Sigmoid colon (tissue), 7 donors: ENCODE measurements at regions of chr17 and their contacts with region 1.

Region 1: DNA sequence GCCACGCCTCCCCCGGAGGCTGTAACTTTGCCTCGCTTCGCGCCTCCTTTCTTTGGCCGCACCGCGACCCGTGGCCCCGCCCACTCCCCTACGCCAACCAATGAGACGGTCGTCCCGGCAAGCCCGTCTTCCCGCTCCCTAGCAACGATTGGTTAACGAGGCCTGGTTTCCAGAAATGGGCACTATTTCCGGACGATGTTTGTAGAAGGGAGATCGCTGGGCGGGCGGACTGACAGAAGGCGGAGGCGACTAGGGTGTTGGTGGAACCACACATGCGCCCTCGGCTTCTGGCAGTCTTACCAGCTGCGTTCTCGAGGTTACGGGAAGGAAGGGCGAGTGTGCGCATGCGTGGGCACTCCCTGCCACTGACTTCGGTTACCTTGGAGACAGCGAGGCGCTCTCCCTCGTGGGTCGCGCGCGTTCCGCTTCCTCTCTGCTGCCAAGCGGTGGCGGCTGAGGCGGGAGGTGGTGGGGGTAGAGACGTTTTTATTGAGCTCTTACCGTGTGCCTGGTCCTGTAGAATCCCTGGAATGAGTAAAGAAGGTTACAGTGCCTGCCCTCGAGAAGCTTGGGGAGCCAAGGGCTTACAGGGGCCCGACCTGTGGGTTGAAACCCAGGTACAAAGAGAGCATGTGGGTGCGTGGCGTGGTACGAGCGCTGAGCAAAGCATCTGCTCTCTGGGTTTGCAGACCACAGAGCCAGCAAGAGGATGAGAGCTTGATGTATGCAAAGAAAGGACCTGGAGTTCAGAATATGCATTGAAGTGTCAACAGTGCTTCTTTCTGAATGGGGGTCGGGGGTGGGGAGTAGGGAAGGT is 500 bp upstream of the MAP3K14 start:
- DNase-seq: peak; percentile 100
- H3K4me3 ChIP-seq: peak overlapping the region; percentile 26 to 93 (median 86)
- H3K27ac ChIP-seq: peak overlapping the region; percentile 95 to 98 (median 97)
- H3K4me1 ChIP-seq: peaks cover 2 to 88% (median 72%) of the 10 kb centered on the region in 4 donors
- H3K27me3 ChIP-seq: no peaks in the 10 kb centered on the region
- CTCF ChIP-seq: no peak
- EP300 ChIP-seq: peak in 1 of 4 donors; percentile 39
- POLR2A ChIP-seq: peak in 1 of 2 donors; percentile 33

Region 2: GRCh38 chr17:45148183-45149036 is 168.9 kb before region 1 on chr17 and contains the start of gene HEXIM1:
- intact Hi-C with region 1: loop called (anchors 5 kb)
- DNase-seq: peak; percentile 100
- H3K4me3 ChIP-seq: peak within 1 kb of the TSS; percentile 81 to 92 (median 89)
- H3K27ac ChIP-seq: peak within 1 kb of the TSS; percentile 97 to 99 (median 98)
- H3K4me1 ChIP-seq: peaks cover 6 to 59% (median 50%) of the 10 kb centered on the region in 4 donors
- H3K27me3 ChIP-seq: no peaks in the 10 kb centered on the region
- CTCF ChIP-seq: no peak
- EP300 ChIP-seq: peak in 1 of 4 donors; percentile 68
- POLR2A ChIP-seq: peak; percentile 100
- total RNA-seq, gene HEXIM1: 41.0 to 60.9 (median 49.4) TPM

Region 3: DNA sequence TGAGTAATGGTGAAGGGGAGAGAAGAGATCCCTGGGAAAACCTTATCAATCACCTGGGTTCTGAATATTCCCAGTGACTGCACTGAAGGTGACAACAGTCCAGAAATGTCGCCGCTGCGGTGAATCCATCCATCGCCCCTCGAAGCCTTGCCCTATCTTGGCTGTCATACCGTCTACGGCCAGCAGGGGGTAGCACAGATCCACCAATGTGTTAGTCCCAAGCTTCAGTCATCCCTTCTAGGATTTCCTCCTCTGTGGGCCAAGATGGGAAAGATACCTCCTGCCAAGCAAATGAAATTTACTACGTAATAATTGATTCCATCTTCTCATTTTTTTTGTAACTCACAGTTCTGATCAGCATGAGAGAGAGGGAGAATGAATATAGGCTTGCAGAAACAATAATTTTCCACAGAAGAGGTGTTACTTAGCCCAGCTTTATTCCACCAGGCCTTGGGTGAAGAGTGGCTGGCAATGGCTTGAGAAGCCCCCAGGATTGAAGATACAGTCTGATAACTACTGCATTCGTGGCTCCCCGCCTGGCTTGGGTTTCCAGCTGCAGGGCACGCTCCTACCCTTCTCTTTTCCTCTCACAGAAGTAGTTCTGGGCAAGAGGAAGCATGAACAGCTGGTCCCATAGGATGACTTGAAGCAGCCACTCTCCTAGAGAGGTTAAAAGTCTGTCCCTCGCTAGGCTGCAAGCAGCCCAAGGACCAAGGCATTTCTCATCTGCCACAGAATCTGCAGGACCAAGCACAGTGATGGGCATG is 98.2 kb before region 1 on chr17:
- intact Hi-C with region 1: loop called (anchors 5 kb)
- DNase-seq: peak; percentile 90
- H3K4me3 ChIP-seq: no peak overlapping the region
- H3K27ac ChIP-seq: no peak overlapping the region
- H3K4me1 ChIP-seq: peaks cover 0 to 20% (median 14%) of the 10 kb centered on the region in 4 donors
- H3K27me3 ChIP-seq: peaks cover 7 to 31% (median 18%) of the 10 kb centered on the region in 3 donors
- CTCF ChIP-seq: peak; percentile 90 to 99 (median 96)
- EP300 ChIP-seq: no peak
- POLR2A ChIP-seq: no peak

Region 4: GRCh38 chr17:45277216-45277849 is 40.0 kb before region 1 on chr17:
- intact Hi-C with region 1: loop called (anchors 2 kb)
- DNase-seq: peak; percentile 96
- H3K4me3 ChIP-seq: no peak overlapping the region
- H3K27ac ChIP-seq: peak overlapping the region; percentile 67 to 98 (median 92)
- H3K4me1 ChIP-seq: peaks cover 0 to 60% (median 51%) of the 10 kb centered on the region in 4 donors
- H3K27me3 ChIP-seq: no peaks in the 10 kb centered on the region
- CTCF ChIP-seq: peak; percentile 71 to 95 (median 94)
- EP300 ChIP-seq: no peak
- POLR2A ChIP-seq: no peak

Region 5: DNA sequence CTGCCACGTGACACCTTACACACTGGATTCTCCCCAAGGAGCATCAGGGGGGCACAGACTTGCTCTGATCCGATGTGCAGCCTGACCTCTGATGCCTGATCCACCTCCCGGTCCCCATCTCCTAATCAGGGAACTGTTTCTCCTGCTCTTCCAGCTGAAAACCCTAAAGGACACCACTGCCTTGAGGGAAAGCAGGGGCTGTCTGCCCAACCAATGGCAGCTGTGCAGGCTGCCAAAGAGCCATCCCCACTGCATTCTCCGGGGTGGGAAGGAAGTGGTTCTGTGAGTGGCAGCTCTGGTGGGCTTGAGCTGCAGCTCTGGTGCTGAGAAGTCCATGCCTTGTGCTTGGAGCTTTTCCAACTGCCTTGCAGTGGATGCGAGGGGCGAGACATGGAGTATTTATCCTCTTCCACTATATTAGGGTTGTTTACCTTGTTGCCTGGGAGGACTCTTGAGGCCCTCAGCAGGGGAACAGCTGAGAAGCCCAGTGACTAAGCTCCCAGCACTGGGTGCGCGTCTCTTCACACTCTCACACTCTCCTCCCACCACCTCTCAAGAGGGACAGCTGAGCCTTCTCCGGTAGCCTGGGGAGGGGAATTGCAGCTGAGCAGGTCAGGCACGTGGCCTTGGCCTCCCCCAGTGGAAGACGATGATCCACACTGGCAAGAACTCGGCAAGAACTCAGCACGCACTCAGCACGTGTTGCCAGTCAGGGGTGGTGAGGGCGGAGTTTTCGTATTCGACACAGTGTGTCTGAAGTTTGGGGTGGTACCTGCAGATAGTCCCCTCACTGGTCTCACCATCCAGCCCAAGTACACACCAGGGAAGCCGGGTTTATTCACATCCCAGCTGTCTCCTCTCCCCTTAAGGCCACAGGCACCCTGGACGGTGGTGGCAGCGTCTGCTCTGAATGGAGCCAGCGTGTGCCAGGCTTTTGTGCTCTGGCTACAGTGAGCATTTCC is 34.4 kb before region 1 on chr17:
- intact Hi-C with region 1: loop called (anchors 2 kb)
- DNase-seq: peak; percentile 91
- H3K4me3 ChIP-seq: no peak overlapping the region
- H3K27ac ChIP-seq: peak overlapping the region; percentile 82 to 98 (median 92)
- H3K4me1 ChIP-seq: peaks cover 0 to 88% (median 74%) of the 10 kb centered on the region in 4 donors
- H3K27me3 ChIP-seq: no peaks in the 10 kb centered on the region
- CTCF ChIP-seq: no peak
- EP300 ChIP-seq: no peak
- POLR2A ChIP-seq: no peak

Region 6: DNA sequence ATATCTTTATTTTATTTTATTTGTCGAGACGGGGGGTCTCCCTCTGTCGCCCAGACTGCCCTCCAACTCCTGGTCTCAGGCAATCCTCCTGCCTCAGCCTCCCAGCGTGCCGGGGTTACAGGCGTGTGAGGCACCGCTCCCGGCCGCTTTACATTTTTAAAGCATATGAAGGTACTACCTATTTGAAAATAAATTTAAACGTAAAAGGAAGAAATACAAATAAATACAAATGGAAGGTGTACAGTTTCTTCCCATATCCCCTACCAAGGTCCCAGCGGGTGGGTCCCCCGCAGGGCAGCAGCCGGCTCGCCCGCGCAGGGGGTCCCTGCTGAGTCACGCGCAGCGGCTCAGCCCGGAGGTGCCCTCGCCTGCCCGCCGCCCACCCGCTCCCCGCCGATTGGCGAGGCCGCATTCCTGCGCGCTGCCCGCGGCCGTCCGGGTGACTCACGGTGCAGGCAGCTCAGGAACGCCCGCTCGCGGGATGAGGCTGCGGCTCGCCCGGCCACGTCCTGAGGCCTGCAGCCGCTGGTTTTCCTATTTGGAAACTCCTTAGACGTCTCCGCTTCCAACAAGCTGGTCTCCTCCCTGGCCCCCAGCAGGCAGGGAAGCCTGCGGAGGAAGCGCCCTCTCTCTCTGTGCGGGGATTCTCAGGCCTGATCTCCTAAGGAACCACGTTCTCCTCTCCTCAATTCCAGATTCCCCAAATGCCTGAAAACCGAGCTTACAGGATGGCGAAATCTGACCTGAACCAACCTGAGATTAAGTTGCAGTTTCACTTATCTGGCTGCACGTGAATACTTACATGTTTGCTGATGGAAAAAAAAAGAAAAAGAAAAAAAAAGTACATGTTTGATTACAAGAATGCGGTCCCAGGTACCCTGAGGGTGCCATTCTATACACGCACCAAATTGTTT is 54.4 kb after region 1 on chr17:
- intact Hi-C with region 1: loop called (anchors 2 kb)
- DNase-seq: peak; percentile 90
- H3K4me3 ChIP-seq: peak overlapping the region in 3 of 4 donors; percentile 34 to 45 (median 42)
- H3K27ac ChIP-seq: peak overlapping the region; percentile 80 to 88 (median 85)
- H3K4me1 ChIP-seq: peaks cover 0 to 33% (median 26%) of the 10 kb centered on the region in 4 donors
- H3K27me3 ChIP-seq: no peaks in the 10 kb centered on the region
- CTCF ChIP-seq: no peak
- EP300 ChIP-seq: no peak
- POLR2A ChIP-seq: peak in 1 of 2 donors; percentile 35

Region 7: DNA sequence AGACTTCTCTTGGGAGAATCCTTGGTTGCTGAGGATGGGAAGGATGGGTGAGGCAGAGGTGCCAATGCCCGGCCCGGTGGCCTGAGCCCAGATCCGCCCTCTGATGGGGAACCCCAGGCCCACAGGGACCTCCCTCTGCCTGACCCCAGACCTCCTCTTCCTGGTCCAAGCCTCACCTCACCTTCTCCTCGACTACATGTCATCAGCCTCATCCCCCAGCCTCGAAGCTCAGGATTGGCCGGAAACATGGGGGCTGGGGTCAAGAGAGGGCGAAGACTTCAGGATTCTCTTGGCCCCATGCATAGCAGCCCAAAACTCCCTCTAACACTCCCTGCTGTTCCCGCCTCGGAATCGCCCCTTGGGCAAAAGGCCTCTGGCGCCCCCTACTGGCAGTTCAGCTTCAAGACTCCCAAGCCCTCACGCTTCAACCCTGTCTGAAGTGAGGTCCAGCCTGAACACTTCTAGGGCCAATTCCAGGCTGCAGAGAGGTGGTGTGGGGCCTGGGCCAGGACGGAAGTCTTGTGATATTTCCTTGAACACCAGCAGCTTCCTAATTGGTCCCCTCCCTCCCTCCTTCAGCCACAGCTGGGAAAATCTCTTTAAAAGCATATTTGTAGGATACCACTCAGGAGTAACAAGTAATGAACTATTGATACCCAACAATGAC is 68.1 kb after region 1 on chr17:
- intact Hi-C with region 1: loop called (anchors 2 kb)
- DNase-seq: peak; percentile 93
- H3K4me3 ChIP-seq: no peak overlapping the region
- H3K27ac ChIP-seq: no peak overlapping the region
- H3K4me1 ChIP-seq: peaks cover 0 to 6% (median 5%) of the 10 kb centered on the region in 4 donors
- H3K27me3 ChIP-seq: no peaks in the 10 kb centered on the region
- CTCF ChIP-seq: peak; percentile 96 to 98 (median 97)
- EP300 ChIP-seq: no peak
- POLR2A ChIP-seq: no peak